ENCODE measurements at regions of chr10 and their contacts with region 1.

Region 1: DNA sequence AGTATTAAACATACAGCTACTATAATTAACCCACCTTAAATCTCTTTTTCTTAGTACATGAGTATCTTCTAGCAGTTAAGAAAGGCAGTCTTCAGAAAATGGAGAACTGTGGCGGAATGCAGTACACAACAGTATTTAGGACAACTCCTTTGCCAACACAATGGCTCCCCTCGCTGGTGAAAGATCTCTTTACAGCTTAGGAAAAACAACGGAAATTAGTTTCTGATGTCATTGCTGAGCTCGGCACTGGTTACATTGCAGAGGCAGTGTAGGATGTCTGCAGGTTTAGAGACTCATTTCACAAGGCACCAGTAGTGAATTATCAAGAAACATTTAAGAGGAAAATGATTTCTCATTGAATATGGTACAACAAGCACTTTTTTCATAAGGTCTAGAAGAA is 43.4 kb downstream of the GLRX3 start:
- DNase-seq: peak in 4 of 5 donors; percentile 44 to 54 (median 50)
- H3K4me3 ChIP-seq: no peak overlapping the region
- H3K4me3 Mint-ChIP-seq: no peak overlapping the region
- H3K27ac ChIP-seq: no peak overlapping the region
- H3K27ac Mint-ChIP-seq: peak overlapping the region in 4 of 7 donors; percentile 20 to 84 (median 70)
- H3K4me1 ChIP-seq: no peaks in the 10 kb centered on the region
- H3K4me1 Mint-ChIP-seq: peaks cover 11 to 19% (median 12%) of the 10 kb centered on the region in 4 donors
- H3K27me3 ChIP-seq: no peaks in the 10 kb centered on the region
- H3K27me3 Mint-ChIP-seq: no peaks in the 10 kb centered on the region

Region 2: DNA sequence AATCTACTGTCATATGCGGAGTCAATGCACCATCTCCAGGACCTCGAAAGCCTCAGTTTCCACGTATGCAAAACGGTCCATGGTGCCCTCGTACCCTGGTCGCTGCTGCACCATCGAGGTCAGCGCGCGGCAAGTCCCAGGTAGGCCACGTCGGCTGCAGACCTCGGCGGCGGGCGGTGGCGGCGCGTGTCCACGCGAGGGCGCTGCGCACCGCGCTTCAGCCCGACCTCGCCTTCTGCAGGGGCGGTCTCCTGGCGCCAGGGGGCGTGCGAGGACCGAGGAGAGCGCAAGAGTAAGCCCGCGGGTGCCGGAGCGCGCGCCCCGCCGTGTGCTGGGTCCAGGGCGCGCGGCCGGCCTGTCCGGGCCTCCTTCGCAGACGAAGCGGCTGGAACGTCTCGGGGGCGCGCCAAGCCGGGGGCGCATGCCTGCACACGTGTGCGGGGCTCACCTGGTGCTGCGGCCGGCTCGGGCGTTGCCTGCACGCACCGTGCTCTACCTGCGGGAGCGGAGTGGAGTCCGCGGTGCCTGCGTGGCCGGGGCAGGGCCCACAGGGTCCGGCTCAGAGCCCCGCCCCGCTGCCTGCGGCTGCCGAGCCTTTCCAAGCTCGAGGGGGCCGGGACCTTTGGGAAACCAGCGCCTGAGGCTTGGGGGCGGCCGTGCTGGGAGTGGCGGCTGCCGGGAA is 10.6 kb after region 1 on chr10:
- CTCF ChIA-PET with region 1: interaction called, 11 read pairs
- POLR2A ChIA-PET with region 1: no interaction called
- intact Hi-C with region 1: no loop called
- DNase-seq: peak; percentile 85 to 91 (median 86)
- H3K4me3 ChIP-seq: peak overlapping the region in 1 of 2 donors; percentile 41
- H3K4me3 Mint-ChIP-seq: no peak overlapping the region
- H3K27ac ChIP-seq: no peak overlapping the region
- H3K27ac Mint-ChIP-seq: no peak overlapping the region
- H3K4me1 ChIP-seq: no peaks in the 10 kb centered on the region
- H3K4me1 Mint-ChIP-seq: peaks cover 2 to 11% (median 6%) of the 10 kb centered on the region in 4 donors
- H3K27me3 ChIP-seq: no peaks in the 10 kb centered on the region
- H3K27me3 Mint-ChIP-seq: peaks cover 0 to 1% of the 10 kb centered on the region in 2 donors

Measured in CD4-positive, alpha-beta memory T cell (primary cell).